GM10248 (cell line): ENCODE measurements at regions of chr17 and their contacts with region 1.

Region 1: DNA sequence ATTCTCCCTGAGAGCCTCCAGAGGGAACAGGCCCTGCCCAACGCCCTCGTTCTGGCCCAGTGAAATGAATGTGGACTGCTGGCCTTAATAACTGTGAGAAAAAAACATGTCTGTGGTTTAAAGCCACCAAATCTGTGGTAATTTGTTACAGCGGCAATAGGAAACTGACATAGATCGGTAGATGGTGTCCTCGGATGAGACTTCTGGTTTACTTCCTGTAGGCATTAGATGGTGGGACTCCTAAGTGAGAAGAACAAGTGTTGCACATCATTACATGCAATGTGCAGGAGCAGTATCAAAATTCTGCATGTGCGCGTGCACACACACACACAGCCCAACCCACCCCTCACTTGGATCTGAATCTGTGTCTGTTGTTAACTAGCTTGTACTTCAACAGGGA is 42.0 kb downstream of the CDK5R1 start:
- DNase-seq: no peak
- CTCF ChIP-seq: no peak

Region 2: GRCh38 chr17:32546031-32546444 is 17.2 kb after region 1 on chr17:
- CTCF ChIA-PET with region 1: interaction called, 21 read pairs
- POLR2A ChIA-PET with region 1: interaction called, 3 read pairs
- DNase-seq: no peak
- CTCF ChIP-seq: no peak